ENCODE measurements at regions of chr19 and their contacts with region 1.

Region 1: DNA sequence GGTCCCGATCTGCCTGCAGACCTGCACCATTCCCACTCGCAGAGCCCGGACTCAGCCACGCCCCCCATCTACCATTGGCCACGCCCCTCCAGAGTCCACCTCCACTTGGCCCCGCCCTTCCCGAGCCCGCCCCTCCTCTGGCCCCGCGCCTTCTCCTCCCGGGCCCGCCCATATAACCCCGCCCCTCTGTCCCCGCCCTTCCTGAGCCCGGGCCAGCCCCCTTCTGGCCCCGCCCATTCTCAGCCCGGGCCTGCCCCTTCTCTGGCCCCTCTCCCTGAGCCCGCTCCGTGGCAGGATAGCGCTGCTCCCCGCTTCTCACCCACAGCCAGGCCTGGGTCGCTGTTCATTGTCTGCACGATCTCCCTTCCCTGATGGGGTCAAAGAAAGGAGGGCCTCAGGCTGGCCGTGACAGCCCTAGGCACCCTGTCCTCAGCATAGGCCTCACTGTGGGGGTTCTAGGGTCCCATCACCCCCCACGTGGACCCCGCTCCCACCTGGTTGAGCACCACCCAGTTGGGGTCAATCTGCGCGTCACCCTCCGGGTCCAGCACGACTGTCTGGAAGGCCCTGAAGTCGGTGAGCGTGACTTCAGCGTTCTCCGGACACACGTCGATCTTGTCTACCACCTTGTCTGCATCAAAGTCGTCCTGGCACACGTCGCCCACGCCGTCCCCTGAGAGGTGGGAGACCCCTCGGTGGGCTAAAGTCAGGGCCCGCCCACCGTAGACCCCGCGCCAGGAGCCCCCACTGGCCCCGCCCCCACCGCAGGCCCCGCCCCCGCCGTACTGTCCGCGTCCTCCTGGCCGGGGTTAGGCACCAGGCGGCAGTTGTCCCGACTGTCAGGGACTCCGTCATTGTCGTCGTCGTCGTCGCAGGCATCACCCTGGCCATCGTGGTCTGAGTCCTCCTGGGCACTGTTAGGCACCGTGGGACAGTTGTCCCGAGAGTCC is 5.7 kb downstream of the COMP start:
- DNase-seq: peak; percentile 73
- ATAC-seq: peak; percentile 56
- H3K4me3 ChIP-seq: no peak overlapping the region
- H3K4me3 Mint-ChIP-seq: peak overlapping the region; percentile 57
- H3K27ac ChIP-seq: no peak overlapping the region
- H3K27ac Mint-ChIP-seq: no peak overlapping the region
- H3K4me1 ChIP-seq: peaks cover 41 to 55% of the 10 kb centered on the region in 2 donors
- H3K4me1 Mint-ChIP-seq: peaks cover 53% of the 10 kb centered on the region
- H3K27me3 ChIP-seq: peaks cover 0 to 60% (median 31%) of the 10 kb centered on the region in 4 experiments
- H3K27me3 Mint-ChIP-seq: peaks cover 44% of the 10 kb centered on the region
- CTCF ChIP-seq: no peak

Region 2: GRCh38 chr19:18831524-18832305 is 46.3 kb after region 1 on chr19 and contains the start of gene UPF1:
- CTCF ChIA-PET with region 1: interaction called, 3 read pairs
- POLR2A ChIA-PET with region 1: no interaction called
- intact Hi-C with region 1: loop called (anchors 5 kb)
- DNase-seq: peak; percentile 97
- ATAC-seq: peak; percentile 81
- H3K4me3 ChIP-seq: peak within 1 kb of the TSS; percentile 63 to 82 (median 73)
- H3K4me3 Mint-ChIP-seq: peak within 1 kb of the TSS; percentile 91
- H3K27ac ChIP-seq: peak within 1 kb of the TSS; percentile 60 to 90
- H3K27ac Mint-ChIP-seq: peak within 1 kb of the TSS; percentile 92
- H3K4me1 ChIP-seq: peaks cover 34 to 39% of the 10 kb centered on the region in 2 donors
- H3K4me1 Mint-ChIP-seq: peaks cover 36% of the 10 kb centered on the region
- H3K27me3 ChIP-seq: no peaks in the 10 kb centered on the region
- H3K27me3 Mint-ChIP-seq: peaks cover 8% of the 10 kb centered on the region
- CTCF ChIP-seq: no peak
- total RNA-seq, gene UPF1: 95.1 and 98.6 TPM in 2 replicates

Measured in B cell (primary cell).